Common myeloid progenitor, CD34-positive (primary cell): ENCODE measurements at regions of chr5 and their contacts with region 1.

Region 1: GRCh38 chr5:177035976-177036375 is 13.5 kb downstream of the ZNF346 start:
- DNase-seq: no peak
- H3K4me3 ChIP-seq: no peak overlapping the region
- H3K27ac ChIP-seq: no peak overlapping the region
- H3K4me1 ChIP-seq: no peaks in the 10 kb centered on the region
- H3K27me3 ChIP-seq: no peaks in the 10 kb centered on the region

Region 2: GRCh38 chr5:177022384-177023308 is 13.3 kb before region 1 on chr5 and contains the start of gene ZNF346:
- CTCF ChIA-PET with region 1: interaction called, 13 read pairs
- POLR2A ChIA-PET with region 1: interaction called, 3 read pairs
- DNase-seq: peak; percentile 94 to 98 (median 97)
- H3K4me3 ChIP-seq: peak within 1 kb of the TSS; percentile 81 to 98 (median 93)
- H3K27ac ChIP-seq: peak within 1 kb of the TSS; percentile 77 to 89
- H3K4me1 ChIP-seq: peaks cover 0 to 24% (median 17%) of the 10 kb centered on the region in 4 experiments
- H3K27me3 ChIP-seq: no peaks in the 10 kb centered on the region